Activated CD4-positive, alpha-beta memory T cell treated with anti-CD3 and anti-CD28 coated beads for 36 hours (primary cell): ENCODE measurements at regions of chr10 and their contacts with region 1.

Region 1: GRCh38 chr10:22573820-22574569 is 140.4 kb downstream of the PIP4K2A start:
- DNase-seq: peak; percentile 40
- H3K4me3 Mint-ChIP-seq: no peak overlapping the region
- H3K27ac Mint-ChIP-seq: peak overlapping the region; percentile 54
- H3K4me1 Mint-ChIP-seq: peaks cover 56% of the 10 kb centered on the region
- H3K27me3 Mint-ChIP-seq: no peaks in the 10 kb centered on the region

Region 2: GRCh38 chr10:21989453-21990154 is 584.4 kb before region 1 on chr10:
- CTCF ChIA-PET with region 1: interaction called, 7 read pairs
- POLR2A ChIA-PET with region 1: no interaction called
- intact Hi-C with region 1: loop called (anchors 10 kb)
- DNase-seq: peak; percentile 44
- H3K4me3 Mint-ChIP-seq: no peak overlapping the region
- H3K27ac Mint-ChIP-seq: no peak overlapping the region
- H3K4me1 Mint-ChIP-seq: peaks cover 11% of the 10 kb centered on the region
- H3K27me3 Mint-ChIP-seq: no peaks in the 10 kb centered on the region

Region 3: DNA sequence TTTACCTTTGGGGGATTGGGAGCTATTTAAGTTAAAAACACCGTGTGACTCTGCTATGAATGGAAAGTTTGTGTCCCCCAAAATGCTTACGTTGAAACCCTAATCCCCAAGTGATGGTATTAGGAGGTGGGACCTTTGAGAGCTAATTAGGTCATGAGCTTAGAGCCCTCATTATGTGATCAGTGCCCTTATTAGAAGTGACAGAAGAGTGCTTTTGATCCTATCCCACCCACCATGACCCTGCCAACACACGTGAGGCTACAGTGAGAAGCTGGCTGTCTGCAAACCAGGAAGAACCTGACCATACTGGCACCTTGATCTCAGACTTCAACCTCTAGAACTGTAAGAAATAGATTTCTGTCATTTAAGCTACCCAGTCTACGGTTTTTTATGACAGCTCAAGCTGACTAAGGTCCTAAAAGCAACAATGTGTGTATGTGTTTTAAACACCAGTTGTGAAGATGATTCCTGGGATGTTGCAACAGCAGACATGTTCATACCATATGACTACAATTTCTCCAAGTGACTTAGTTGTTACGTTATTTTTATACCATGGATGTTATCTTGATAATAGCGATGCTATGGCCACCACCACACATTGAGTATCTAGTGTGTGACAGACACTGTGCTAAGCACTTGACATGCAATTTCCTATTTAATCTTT is 16.0 kb after region 1 on chr10:
- CTCF ChIA-PET with region 1: interaction called, 44 read pairs
- POLR2A ChIA-PET with region 1: no interaction called
- intact Hi-C with region 1: no loop called
- DNase-seq: no peak
- H3K4me3 Mint-ChIP-seq: no peak overlapping the region
- H3K27ac Mint-ChIP-seq: no peak overlapping the region
- H3K4me1 Mint-ChIP-seq: peaks cover 22% of the 10 kb centered on the region
- H3K27me3 Mint-ChIP-seq: no peaks in the 10 kb centered on the region

Region 4: GRCh38 chr10:22599048-22599561 is 25.1 kb after region 1 on chr10:
- CTCF ChIA-PET with region 1: interaction called, 4 read pairs
- POLR2A ChIA-PET with region 1: interaction called, 3 read pairs
- intact Hi-C with region 1: loop called (anchors 1 kb)
- DNase-seq: no peak
- H3K4me3 Mint-ChIP-seq: no peak overlapping the region
- H3K27ac Mint-ChIP-seq: peak overlapping the region; percentile 57
- H3K4me1 Mint-ChIP-seq: peaks cover 75% of the 10 kb centered on the region
- H3K27me3 Mint-ChIP-seq: no peaks in the 10 kb centered on the region

Region 5: DNA sequence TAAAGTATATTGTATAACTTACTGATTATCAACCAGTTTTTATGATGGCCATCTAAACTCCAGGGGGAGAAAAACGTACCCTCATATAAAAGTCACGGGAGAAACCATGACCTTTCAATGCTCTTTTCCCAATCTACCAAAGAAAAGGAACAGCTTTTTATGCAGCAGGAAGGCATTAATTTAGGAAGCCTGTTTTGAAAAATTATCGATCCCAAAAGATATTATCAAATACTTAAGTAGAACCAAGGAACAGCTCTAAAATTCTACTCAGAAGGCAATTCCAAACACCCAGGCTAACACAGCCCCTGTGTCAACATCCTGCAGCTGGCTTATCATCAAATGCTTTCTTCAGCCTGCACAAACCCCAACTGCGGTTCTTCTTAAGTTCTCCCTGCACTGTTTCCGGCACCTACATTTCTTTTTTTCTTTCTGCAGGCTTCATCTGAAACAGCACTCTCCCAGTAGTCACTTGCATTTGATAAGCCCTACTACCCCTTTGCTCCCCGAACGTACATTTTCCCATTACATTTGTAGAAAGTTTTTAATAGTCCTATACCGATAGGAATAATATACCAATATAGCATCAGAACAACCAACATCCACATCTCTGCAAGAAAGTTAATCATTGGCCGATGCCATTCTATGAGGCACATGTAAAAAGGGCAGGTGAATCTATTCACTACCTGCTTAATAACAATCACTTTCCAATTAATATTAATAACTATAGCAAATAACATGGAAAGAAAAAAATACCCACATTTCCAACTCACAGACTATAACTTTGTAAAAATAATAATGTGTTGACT is 92.5 kb after region 1 on chr10:
- CTCF ChIA-PET with region 1: no interaction called
- POLR2A ChIA-PET with region 1: no interaction called
- intact Hi-C with region 1: loop called (anchors 5 kb)
- DNase-seq: peak; percentile 71
- H3K4me3 Mint-ChIP-seq: peak overlapping the region; percentile 72
- H3K27ac Mint-ChIP-seq: peak overlapping the region; percentile 84
- H3K4me1 Mint-ChIP-seq: peaks cover 75% of the 10 kb centered on the region
- H3K27me3 Mint-ChIP-seq: no peaks in the 10 kb centered on the region